Activated B cell treated with CpG ODN at 0.5 μM for 24 hours (primary cell): ENCODE measurements at regions of chr12 and their contacts with region 1.

Region 1: DNA sequence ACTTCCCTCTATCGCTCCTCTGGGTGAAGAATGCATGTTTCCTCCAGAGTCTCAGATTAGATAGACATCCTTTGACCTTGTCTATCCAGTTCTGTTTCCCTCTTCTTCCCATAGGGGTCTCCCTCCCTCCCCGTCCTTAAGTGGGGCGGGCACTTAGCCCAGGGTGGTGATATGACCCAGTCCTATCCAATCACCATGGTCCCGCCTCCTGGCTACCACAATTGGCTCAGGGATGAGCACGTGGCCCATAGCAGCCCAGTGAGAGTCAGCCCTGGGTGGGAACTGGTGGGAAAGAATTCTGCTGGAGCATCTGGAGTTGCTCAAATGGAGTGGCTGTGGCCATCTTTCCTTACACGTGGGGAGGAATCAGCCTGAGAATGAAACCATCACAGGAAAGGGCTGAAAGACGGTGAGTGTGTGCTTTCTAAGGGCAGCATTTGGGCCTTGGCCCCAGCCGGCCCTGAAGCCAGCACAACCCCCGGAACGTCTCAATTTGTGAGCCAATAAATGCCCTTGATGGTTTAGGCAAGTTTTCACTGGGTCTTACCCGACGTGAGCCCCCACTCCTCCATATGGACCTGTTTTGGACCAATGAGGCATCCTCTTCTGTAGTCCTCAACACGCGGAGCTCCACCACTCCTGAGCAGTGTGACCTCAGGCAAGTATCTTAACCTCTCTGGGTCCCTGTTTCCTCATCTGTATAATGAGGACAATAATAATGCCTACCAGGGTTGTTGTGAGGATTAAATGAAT is 14.4 kb upstream of the MLXIP start:
- DNase-seq: no peak
- ATAC-seq: peak; percentile 82
- H3K4me3 Mint-ChIP-seq: no peak overlapping the region
- H3K27ac Mint-ChIP-seq: peak overlapping the region; percentile 32
- H3K4me1 Mint-ChIP-seq: peaks cover 49% of the 10 kb centered on the region
- H3K27me3 Mint-ChIP-seq: no peaks in the 10 kb centered on the region
- CTCF ChIP-seq: no peak

Region 2: GRCh38 chr12:122107261-122107660 is 43.1 kb after region 1 on chr12:
- CTCF ChIA-PET with region 1: no interaction called
- POLR2A ChIA-PET with region 1: interaction called, 5 read pairs
- intact Hi-C with region 1: loop called (anchors 5 kb)
- DNase-seq: no peak
- ATAC-seq: no peak
- H3K4me3 Mint-ChIP-seq: no peak overlapping the region
- H3K27ac Mint-ChIP-seq: no peak overlapping the region
- H3K4me1 Mint-ChIP-seq: peaks cover 50% of the 10 kb centered on the region
- H3K27me3 Mint-ChIP-seq: no peaks in the 10 kb centered on the region
- CTCF ChIP-seq: no peak

Region 3: DNA sequence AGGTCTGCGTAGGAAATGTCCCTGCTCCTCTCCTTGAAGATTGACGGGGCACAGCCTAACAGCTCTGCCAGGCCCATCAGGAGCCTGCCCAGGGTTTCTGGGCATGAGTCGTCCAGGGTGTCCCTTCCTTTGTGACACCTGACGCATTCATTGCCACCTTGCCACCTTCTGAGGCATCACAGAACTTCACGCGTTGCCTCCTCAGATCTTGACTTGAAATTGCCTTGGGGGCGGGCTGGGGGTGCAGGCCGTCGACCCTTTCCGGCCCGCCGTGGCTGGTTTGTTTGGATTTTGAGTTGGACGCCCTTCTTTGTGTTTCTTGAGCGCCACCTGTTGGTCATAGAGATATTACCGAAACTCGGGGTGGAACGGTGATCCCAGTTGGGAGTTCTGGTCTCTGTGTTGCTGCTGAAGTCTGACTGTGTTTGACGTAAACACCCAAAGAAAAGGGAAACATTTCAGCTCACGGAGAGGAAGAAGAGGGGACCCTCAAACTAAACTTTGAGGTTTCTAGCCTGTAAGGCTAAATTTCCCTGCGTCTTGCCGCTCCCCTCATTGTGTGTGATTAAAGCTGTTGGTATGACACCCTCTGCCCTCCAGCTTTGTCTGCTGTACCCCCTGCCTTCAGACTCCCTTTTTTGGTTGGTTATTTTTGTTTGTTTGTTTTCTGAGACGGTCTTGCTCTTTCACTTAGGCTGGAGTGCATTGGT is 59.0 kb after region 1 on chr12:
- CTCF ChIA-PET with region 1: interaction called, 17 read pairs
- POLR2A ChIA-PET with region 1: no interaction called
- intact Hi-C with region 1: loop called (anchors 2 kb)
- DNase-seq: peak; percentile 50
- ATAC-seq: peak; percentile 62
- H3K4me3 Mint-ChIP-seq: no peak overlapping the region
- H3K27ac Mint-ChIP-seq: peak overlapping the region; percentile 38
- H3K4me1 Mint-ChIP-seq: peaks cover 23% of the 10 kb centered on the region
- H3K27me3 Mint-ChIP-seq: no peaks in the 10 kb centered on the region
- CTCF ChIP-seq: no peak

Region 4: DNA sequence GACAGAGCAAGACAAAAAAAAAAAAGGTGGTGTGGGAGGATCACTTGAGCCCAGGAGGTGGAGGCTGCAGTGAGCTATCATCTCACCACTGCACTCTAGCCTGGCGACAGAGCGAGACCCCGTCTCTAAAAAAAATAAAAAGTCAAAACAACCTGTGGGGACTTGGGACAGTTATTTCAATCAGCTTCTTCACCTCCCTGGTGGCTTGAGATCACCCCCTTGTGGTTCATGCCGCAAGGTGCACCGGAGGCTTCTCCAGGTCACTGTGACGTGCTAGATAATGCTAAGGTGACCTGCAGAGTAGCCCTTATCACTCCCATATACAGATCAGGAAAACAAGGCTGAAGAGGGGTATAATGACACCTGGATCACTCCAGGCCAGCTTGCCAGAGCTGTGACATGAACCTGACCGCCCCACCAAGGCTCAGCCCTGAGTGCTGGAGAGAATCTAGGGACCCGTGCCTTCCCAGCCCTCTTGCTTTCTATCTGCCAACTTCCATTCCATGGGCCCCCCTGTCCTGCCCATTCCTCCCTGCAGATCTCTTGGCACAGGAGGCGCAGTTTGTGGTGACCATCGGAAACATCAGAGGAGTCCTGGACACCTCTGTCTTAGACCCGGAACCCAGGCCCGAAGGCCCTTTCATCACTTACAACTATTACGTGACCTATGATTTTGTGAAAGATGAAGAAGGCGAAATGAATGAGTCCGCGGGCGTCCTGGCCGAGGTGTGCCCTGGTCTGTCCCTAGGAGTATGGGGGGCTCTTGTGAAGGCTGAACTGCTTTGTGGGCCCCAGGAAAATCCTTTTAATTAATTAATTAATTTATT is 126.9 kb after region 1 on chr12:
- CTCF ChIA-PET with region 1: interaction called, 3 read pairs
- POLR2A ChIA-PET with region 1: no interaction called
- intact Hi-C with region 1: loop called (anchors 5 kb)
- DNase-seq: peak; percentile 42
- ATAC-seq: peak; percentile 92
- H3K4me3 Mint-ChIP-seq: no peak overlapping the region
- H3K27ac Mint-ChIP-seq: no peak overlapping the region
- H3K4me1 Mint-ChIP-seq: no peaks in the 10 kb centered on the region
- H3K27me3 Mint-ChIP-seq: no peaks in the 10 kb centered on the region
- CTCF ChIP-seq: no peak